Activated CD8-positive, alpha-beta T cell treated with anti-CD3 and anti-CD28 coated beads for 36 hours (primary cell): ENCODE measurements at regions of chr6 and their contacts with region 1.

Region 1: GRCh38 chr6:33248925-33249731 is 22.5 kb downstream of the VPS52 start:
- DNase-seq: peak; percentile 99
- ATAC-seq: peak; percentile 91
- H3K4me3 Mint-ChIP-seq: peak overlapping the region; percentile 92
- H3K27ac Mint-ChIP-seq: peak overlapping the region; percentile 97
- H3K4me1 Mint-ChIP-seq: peaks cover 34% of the 10 kb centered on the region
- H3K27me3 Mint-ChIP-seq: no peaks in the 10 kb centered on the region
- CTCF ChIP-seq: no peak

Region 2: GRCh38 chr6:32971581-32972352 is 277.4 kb before region 1 on chr6:
- CTCF ChIA-PET with region 1: no interaction called
- POLR2A ChIA-PET with region 1: interaction called, 11 read pairs
- intact Hi-C with region 1: no loop called
- DNase-seq: peak; percentile 100
- ATAC-seq: peak; percentile 38
- H3K4me3 Mint-ChIP-seq: peak overlapping the region; percentile 95
- H3K27ac Mint-ChIP-seq: peak overlapping the region; percentile 99
- H3K4me1 Mint-ChIP-seq: peaks cover 23% of the 10 kb centered on the region
- H3K27me3 Mint-ChIP-seq: no peaks in the 10 kb centered on the region
- CTCF ChIP-seq: no peak

Region 3: GRCh38 chr6:33126101-33126714 is 122.9 kb before region 1 on chr6:
- CTCF ChIA-PET with region 1: interaction called, 75 read pairs
- POLR2A ChIA-PET with region 1: interaction called, 8 read pairs
- intact Hi-C with region 1: loop called (anchors 2 kb)
- DNase-seq: peak; percentile 86
- ATAC-seq: peak; percentile 56
- H3K4me3 Mint-ChIP-seq: no peak overlapping the region
- H3K27ac Mint-ChIP-seq: no peak overlapping the region
- H3K4me1 Mint-ChIP-seq: no peaks in the 10 kb centered on the region
- H3K27me3 Mint-ChIP-seq: peaks cover 3% of the 10 kb centered on the region
- CTCF ChIP-seq: peak; percentile 71

Region 4: DNA sequence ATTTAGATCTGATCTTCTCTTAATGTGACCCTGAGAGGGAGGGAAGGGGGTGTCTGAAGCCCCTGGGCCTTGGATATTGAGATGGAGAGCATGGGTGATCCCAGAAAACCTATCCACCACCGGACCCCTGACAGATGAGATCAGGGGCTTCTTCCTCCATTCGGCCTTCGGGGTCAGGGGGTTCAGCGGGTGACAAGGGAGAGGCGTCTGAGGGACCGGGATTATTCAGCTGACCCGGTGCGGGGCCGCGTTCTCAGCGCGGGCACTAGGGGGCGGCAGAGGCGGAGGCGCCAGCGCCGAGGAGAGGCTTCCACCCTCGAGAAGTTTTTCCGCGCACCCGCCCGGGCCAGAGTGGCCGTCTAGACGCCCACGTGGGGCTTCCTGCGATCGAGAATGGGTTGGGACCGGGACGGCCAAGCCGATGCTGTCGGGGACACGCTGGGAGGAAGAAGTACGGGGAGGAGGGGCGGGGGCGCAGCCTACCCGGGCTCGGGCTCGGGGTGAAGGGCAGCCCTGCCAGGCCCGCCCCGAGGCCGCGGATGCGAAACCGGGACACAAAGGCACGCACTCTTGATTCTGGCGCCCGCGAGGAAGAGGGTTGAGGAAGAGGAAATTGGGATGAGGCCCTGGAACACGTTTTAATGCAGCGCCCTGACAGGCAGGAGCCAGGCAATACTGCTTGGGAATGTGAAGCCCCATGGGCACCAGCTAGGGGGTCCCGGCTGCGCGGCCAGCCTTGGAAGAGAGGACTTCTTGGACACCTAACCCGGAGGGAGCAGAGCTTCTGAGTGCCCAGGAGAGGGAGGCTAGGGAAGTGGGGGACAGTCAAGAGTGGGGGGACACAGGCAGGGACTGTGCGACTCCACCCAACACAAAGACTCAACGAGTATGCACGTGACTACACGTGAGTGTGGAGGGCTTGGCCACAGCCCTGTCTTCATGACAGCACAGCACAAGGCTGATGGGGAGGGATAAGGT is 87.5 kb before region 1 on chr6:
- CTCF ChIA-PET with region 1: interaction called, 65 read pairs
- POLR2A ChIA-PET with region 1: interaction called, 7 read pairs
- intact Hi-C with region 1: loop called (anchors 10 kb)
- DNase-seq: peak; percentile 83
- ATAC-seq: peak; percentile 97
- H3K4me3 Mint-ChIP-seq: peak overlapping the region; percentile 72
- H3K27ac Mint-ChIP-seq: peak overlapping the region; percentile 78
- H3K4me1 Mint-ChIP-seq: peaks cover 12% of the 10 kb centered on the region
- H3K27me3 Mint-ChIP-seq: peaks cover 2% of the 10 kb centered on the region
- CTCF ChIP-seq: peak; percentile 96

Region 5: GRCh38 chr6:33208091-33208967 is 40.8 kb before region 1 on chr6 and contains the start of gene RING1:
- CTCF ChIA-PET with region 1: interaction called, 22 read pairs
- POLR2A ChIA-PET with region 1: interaction called, 37 read pairs
- intact Hi-C with region 1: loop called (anchors 5 kb)
- DNase-seq: peak; percentile 89
- ATAC-seq: peak; percentile 24
- H3K4me3 Mint-ChIP-seq: peak within 1 kb of the TSS; percentile 77
- H3K27ac Mint-ChIP-seq: peak within 1 kb of the TSS; percentile 94
- H3K4me1 Mint-ChIP-seq: peaks cover 63% of the 10 kb centered on the region
- H3K27me3 Mint-ChIP-seq: no peaks in the 10 kb centered on the region
- CTCF ChIP-seq: no peak
- total RNA-seq, gene RING1: 26.8 to 27.5 TPM

Region 6: GRCh38 chr6:33271458-33272274 is 22.5 kb after region 1 on chr6 and contains the starts of genes RPS18 and VPS52:
- CTCF ChIA-PET with region 1: interaction called, 36 read pairs
- POLR2A ChIA-PET with region 1: interaction called, 53 read pairs
- intact Hi-C with region 1: no loop called
- DNase-seq: peak; percentile 96
- ATAC-seq: peak; percentile 85
- H3K4me3 Mint-ChIP-seq: peak within 1 kb of the TSS; percentile 95
- H3K27ac Mint-ChIP-seq: peak within 1 kb of the TSS; percentile 100
- H3K4me1 Mint-ChIP-seq: peaks cover 36% of the 10 kb centered on the region
- H3K27me3 Mint-ChIP-seq: no peaks in the 10 kb centered on the region
- CTCF ChIP-seq: no peak
- total RNA-seq, gene RPS18: 4,910 to 4,938 TPM
- total RNA-seq, gene VPS52: 31.2 to 34.3 TPM

Region 7: GRCh38 chr6:33481189-33481588 is 232.1 kb after region 1 on chr6:
- CTCF ChIA-PET with region 1: no interaction called
- POLR2A ChIA-PET with region 1: no interaction called
- intact Hi-C with region 1: no loop called
- DNase-seq: peak; percentile 7
- ATAC-seq: no peak
- H3K4me3 Mint-ChIP-seq: no peak overlapping the region
- H3K27ac Mint-ChIP-seq: no peak overlapping the region
- H3K4me1 Mint-ChIP-seq: no peaks in the 10 kb centered on the region
- H3K27me3 Mint-ChIP-seq: no peaks in the 10 kb centered on the region
- CTCF ChIP-seq: no peak